Posterior vena cava (tissue), 2 donors: ENCODE measurements at regions of chr3 and their contacts with region 1.

Region 1: DNA sequence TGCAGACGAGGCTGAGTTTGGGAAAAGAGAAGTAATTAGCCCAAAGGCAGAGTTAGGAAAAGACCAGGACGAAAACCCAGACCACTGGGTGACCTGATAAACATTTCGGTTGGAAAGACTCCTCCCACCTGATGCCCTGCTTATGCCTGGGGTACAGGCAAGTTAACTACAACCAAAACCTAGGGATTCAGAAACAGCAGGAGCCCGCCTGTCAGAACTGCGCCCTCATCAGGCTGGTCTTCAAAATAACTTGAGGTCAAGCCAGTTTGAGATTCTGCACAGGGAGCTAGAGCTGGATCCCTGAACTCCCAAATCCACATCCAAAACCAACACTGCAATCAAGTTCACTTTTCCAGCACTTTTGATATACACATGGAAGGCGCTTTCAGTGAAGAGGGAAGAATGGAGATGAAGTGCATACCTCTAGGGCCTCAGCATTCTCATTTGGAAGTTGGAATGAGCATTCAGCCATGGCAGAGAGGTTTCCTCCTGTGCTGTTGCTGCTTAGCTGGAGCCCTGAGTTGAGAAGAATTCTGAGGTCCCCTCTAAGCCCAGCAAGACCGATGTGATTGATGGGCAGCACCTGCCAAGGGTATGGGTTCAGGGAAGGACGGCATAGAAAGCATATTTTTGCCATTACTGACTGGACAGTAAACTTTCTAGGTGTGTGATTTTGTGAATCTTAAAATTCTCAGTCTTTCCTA is 11.6 kb downstream of the TSEN2 start:
- DNase-seq: no peak

Region 2: GRCh38 chr3:12527757-12528143 is 31.8 kb after region 1 on chr3:
- intact Hi-C with region 1: loop called in 1 of 2 experiments (anchors 1 kb)
- DNase-seq: no peak

Region 3: GRCh38 chr3:12648384-12648959 is 152.6 kb after region 1 on chr3:
- intact Hi-C with region 1: no loop called
- DNase-seq: no peak